Dendritic cell treated with granulocyte-macrophage colony-stimulating factor and Interleukin-4, amounts not matched to agents 40 ng/mL and 50 ng/mL, for 4 days (primary cell): ENCODE measurements at regions of chr1 and their contacts with region 1.

Region 1: DNA sequence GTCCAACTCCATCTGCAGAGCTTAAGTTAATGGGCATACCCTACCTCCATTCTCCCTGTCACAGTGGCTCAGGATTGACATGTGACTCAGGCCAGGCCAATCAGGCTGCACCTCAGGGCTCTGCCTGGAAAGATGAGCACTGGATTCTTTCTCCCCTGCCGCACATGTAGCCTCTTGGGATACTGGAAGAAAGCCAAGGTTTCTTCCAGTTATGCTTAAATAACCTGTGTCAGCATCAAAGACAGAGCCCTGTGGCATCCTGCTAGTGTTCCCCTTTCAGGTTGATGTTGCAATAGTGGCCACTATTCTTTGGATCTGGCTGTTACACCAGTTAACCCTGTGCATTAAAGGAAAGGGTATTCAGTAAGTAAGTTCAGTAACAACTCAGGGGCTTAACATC is 55.1 kb upstream of the SYT6 start:
- H3K4me3 Mint-ChIP-seq: no peak overlapping the region
- H3K27ac Mint-ChIP-seq: no peak overlapping the region
- H3K4me1 Mint-ChIP-seq: peaks cover 7% of the 10 kb centered on the region
- H3K27me3 Mint-ChIP-seq: peaks cover 60% of the 10 kb centered on the region

Region 2: GRCh38 chr1:114002492-114003239 is 206.1 kb before region 1 on chr1:
- intact Hi-C with region 1: loop called (anchors 10 kb)
- H3K4me3 Mint-ChIP-seq: no peak overlapping the region
- H3K27ac Mint-ChIP-seq: no peak overlapping the region
- H3K4me1 Mint-ChIP-seq: peaks cover 24% of the 10 kb centered on the region
- H3K27me3 Mint-ChIP-seq: peaks cover 11% of the 10 kb centered on the region

Region 3: DNA sequence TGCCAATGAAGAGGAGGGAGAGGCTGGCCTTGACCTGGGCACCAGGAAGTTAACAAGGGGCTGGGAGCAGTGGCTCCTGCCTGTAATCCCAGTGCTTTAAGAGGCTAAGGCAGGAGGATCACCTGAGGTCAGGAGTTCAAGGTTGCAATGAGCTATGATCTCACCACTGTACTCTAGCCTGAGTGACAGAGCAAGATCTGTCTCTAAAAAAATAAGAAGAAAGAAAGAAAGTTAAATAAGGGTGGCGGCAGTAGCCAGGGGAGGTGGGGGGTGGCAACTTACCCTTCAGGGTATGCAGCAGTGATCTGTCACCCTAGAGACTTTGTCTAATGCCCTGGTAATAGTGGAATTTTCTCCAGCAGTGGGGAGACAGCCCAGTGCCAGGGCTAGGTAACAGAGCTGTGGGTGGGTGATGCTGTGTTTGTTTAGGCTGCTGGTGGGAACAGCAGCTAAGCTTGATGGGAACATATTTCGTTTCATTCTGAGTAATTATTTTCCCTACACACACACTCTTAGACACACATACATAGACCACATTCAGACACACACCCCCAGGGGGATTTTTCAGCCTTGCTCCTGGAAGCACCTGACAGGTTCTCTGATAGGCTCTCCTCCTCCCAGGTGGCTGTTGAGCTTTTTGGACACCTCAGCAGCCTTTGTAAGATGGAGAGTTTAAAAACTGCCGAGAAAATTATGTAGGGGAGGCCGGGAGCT is 43.7 kb before region 1 on chr1:
- intact Hi-C with region 1: no loop called
- H3K4me3 Mint-ChIP-seq: no peak overlapping the region
- H3K27ac Mint-ChIP-seq: no peak overlapping the region
- H3K4me1 Mint-ChIP-seq: peaks cover 12% of the 10 kb centered on the region
- H3K27me3 Mint-ChIP-seq: peaks cover 22% of the 10 kb centered on the region

Region 4: GRCh38 chr1:114330451-114330983 is 121.8 kb after region 1 on chr1:
- intact Hi-C with region 1: no loop called
- H3K4me3 Mint-ChIP-seq: no peak overlapping the region
- H3K27ac Mint-ChIP-seq: no peak overlapping the region
- H3K4me1 Mint-ChIP-seq: peaks cover 8% of the 10 kb centered on the region
- H3K27me3 Mint-ChIP-seq: peaks cover 7% of the 10 kb centered on the region